HEK293T (cell line): ENCODE measurements at regions of chr21 and their contacts with region 1.

Region 1: GRCh38 chr21:37060296-37060695 is 12.6 kb downstream of the PIGP start:
- DNase-seq: peak; percentile 75

Region 2: DNA sequence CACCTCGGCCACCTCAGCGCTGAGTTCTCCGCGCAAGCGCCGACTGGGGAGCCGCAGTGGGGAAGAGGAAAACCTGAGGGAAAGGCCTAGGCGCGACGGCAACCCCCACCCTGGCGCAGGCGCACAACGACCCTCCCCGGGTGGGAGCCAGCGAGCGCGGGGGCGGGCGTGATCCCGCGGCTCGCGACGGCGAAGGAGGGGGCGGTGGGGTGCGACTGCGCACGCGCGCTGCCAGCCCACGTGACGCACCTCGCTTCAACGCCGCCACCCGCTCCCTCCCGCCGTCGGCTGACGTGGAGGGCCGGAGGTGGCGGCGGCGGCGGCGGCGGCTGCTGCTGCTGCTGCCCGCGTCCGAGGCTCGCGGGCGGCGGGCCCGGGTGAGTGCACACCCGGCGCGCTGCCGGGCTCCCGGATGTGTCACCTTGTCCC is 12.7 kb after region 1 on chr21 and contains the starts of genes PIGP and TTC3:
- CTCF ChIA-PET with region 1: interaction called, 3 read pairs
- POLR2A ChIA-PET with region 1: interaction called, 12 read pairs
- DNase-seq: peak; percentile 99

Region 3: GRCh38 chr21:37101384-37101783 is 41.1 kb after region 1 on chr21:
- CTCF ChIA-PET with region 1: no interaction called
- POLR2A ChIA-PET with region 1: no interaction called
- DNase-seq: no peak